ENCODE measurements at regions of chr6 and their contacts with region 1.

Region 1: GRCh38 chr6:154733626-154734382 is 588 bp downstream of the SCAF8 start:
- DNase-seq: peak; percentile 80
- H3K4me3 ChIP-seq: peak overlapping the region; percentile 90
- H3K27me3 ChIP-seq: no peaks in the 10 kb centered on the region
- CTCF ChIP-seq: no peak

Region 2: GRCh38 chr6:154721460-154721859 is 12.3 kb before region 1 on chr6:
- CTCF ChIA-PET with region 1: interaction called, 7 read pairs
- POLR2A ChIA-PET with region 1: interaction called, 11 read pairs
- DNase-seq: no peak
- H3K4me3 ChIP-seq: no peak overlapping the region
- H3K27me3 ChIP-seq: peaks cover 1% of the 10 kb centered on the region
- CTCF ChIP-seq: no peak